SK-N-SH (cell line): ENCODE measurements at regions of chr2 and their contacts with region 1.

Region 1: DNA sequence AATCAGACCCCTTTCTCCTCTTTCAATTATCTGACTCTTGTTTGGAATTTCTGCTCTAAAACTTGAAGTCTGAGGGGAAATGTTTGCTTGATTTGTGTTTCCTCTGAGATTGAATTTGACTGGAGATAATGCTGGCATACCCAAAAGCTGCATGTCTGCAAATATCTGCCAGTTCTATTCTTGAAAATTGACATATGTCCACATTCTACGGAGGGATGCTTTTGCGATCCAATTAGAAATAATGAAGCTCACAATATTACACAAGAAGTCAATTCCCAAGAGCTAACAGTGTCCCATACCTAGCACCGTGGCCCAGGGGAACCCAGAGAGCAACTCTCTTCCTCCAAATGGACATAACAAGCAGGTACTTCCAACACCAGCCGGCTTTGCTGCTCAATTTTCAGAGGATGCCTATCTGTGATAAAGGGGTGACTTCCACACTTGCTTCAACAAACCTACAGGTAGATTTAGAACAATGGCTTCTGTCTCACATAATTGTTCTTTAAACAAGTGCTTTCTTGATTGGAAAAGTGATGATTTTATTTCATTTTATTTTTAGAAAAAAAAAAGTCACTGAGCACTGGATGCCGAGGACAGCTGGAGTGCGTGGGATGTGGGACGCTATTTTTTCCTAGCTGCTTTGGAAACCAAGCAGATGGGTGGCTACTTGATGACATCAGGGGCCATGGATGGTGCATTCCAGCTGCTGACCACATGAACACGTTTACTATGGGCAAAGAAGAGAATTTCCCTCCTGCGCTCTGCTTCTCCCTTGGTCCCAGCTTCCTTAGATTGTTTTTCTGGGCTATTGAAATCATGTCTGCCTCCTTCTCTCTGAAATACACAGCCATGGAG is 488.9 kb downstream of the RNF144A start:
- DNase-seq: no peak
- H3K4me3 ChIP-seq: no peak overlapping the region
- H3K27ac ChIP-seq: no peak overlapping the region
- H3K4me1 ChIP-seq: peaks cover 0 to 14% of the 10 kb centered on the region in 2 experiments; a peak in 2 of 4 replicates
- H3K27me3 ChIP-seq: no peaks in the 10 kb centered on the region; the same call in 1 of the 2 replicates
- CTCF ChIP-seq: no peak
- EP300 ChIP-seq: no peak
- RAD21 ChIP-seq: no peak

Region 2: GRCh38 chr2:6968319-6969100 is 437.6 kb before region 1 on chr2:
- CTCF ChIA-PET with region 1: no interaction called
- POLR2A ChIA-PET with region 1: no interaction called
- DNase-seq: peak; percentile 50
- H3K4me3 ChIP-seq: no peak overlapping the region
- H3K27ac ChIP-seq: peak overlapping the region in 1 of 2 experiments; percentile 39; a peak in 1 of 4 replicates
- H3K4me1 ChIP-seq: peaks cover 0 to 26% of the 10 kb centered on the region in 2 experiments; a peak in 1 of 4 replicates
- H3K27me3 ChIP-seq: no peaks in the 10 kb centered on the region
- CTCF ChIP-seq: peak; percentile 32; the same call in 1 of the 2 replicates
- EP300 ChIP-seq: no peak
- RAD21 ChIP-seq: peak; percentile 56

Region 3: DNA sequence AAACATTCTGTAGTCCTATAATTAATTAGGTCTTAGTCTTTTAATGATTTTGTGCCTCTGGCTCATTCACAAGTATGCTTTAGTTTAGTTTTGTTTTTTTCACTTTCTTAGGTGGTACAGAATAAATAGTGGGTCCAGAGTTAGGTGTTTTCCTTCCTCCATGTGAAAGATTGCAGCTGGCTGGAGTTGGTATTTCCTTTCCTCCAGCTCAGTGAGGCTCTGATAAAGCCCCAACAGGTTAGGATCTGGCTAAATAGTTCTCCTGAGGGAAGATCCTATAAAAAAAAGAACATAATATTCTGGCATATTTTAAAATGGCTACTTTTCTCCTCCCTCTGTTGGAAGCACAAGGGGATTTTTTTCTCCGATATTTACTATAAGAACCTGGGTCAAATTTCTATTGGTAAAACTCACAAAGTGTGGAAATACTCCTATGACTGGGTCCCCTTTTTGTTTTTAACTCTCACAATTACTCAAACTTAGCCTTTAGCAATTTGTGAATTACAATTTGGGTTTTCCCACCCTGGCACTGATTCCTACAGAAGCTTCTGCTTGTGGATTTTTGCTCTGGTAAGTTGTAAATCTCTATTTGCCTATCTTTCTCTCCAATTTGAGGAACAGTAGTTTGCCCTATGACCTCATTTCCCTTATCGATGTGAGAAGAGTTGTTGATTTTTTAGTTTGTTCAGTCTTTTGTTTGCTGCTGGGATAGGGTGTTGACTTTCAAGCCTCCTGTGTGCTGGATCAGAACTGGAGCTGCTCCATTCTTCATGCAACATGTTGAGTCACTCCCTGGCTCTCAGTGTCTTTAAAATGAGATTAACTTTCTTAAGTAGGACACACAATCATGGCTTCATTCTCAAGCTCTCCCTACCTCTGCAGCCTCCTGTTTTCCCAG is 12.0 kb after region 1 on chr2:
- CTCF ChIA-PET with region 1: interaction called, 11 read pairs
- POLR2A ChIA-PET with region 1: no interaction called
- DNase-seq: no peak
- H3K4me3 ChIP-seq: no peak overlapping the region
- H3K27ac ChIP-seq: no peak overlapping the region
- H3K4me1 ChIP-seq: no peaks in the 10 kb centered on the region; a peak in 3 of 4 replicates
- H3K27me3 ChIP-seq: 0 out of 2 replicates have a peak, but pooled peaks cover 5% of the 10 kb centered on the region
- CTCF ChIP-seq: no peak
- EP300 ChIP-seq: no peak
- RAD21 ChIP-seq: no peak